Activated T-helper 2 cell treated with anti-CD3 and anti-CD28 coated beads, Interferon-gamma antibody, Interleukin-2, Interleukin-4, amounts not matched to agents 10 μg/mL and 5 μg/mL and 100 μg/mL, durations not matched to agents 14 hours and 24 hours and 36 hours (primary cell): ENCODE measurements at regions of chr10 and their contacts with region 1.

Region 1: DNA sequence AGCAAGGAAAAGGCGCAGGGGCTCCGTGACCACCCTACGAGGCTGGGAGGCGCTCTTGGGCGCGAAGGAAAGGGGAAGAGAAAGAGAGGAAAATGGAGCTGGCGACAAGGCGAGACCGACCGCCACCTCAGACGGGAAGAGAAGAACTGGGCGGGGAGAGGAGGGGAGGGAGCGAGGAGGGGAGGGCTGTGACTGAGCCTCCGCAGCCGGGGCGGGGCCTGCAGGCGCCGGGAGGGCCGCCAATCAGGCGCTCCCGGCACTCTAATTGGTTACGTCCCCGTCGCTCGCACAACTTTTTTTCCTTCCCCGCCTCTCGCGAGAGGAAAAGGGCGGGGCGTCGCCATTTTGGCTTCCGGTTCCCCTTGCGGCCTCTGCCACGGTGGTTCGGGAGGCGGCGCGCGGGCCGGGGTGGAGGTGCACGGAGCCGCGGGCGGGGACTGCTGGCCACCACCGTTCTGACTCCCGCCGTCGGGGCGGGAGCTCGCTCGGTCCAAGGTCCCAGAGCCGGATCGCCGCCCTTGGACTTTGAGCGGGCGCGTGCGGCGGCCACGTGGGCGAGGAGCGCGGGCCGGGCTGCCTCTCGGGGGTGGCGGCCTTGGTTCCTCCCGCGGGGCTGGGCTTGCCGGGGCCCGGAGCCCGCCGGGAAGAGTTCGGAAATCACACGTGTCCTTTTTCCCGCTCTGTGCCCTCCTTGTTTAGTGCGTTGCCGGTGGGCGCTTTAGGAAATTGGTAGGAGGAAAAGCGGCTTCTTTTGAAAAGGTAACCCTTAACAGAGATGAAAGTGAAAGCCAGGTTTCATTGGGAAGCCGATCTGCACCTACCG is at the start of gene GDI2:
- DNase-seq: peak; percentile 96
- H3K4me3 Mint-ChIP-seq: peak within 1 kb of the TSS; percentile 99
- H3K27ac Mint-ChIP-seq: peak within 1 kb of the TSS; percentile 89
- H3K4me1 Mint-ChIP-seq: peaks cover 51% of the 10 kb centered on the region
- H3K27me3 Mint-ChIP-seq: no peaks in the 10 kb centered on the region
- total RNA-seq, gene GDI2: 301 and 302 TPM in 2 replicates

Region 2: GRCh38 chr10:5684318-5684970 is 129.1 kb before region 1 on chr10 and contains the start of gene TASOR2:
- intact Hi-C with region 1: loop called (anchors 2 kb)
- DNase-seq: peak; percentile 96
- H3K4me3 Mint-ChIP-seq: peak within 1 kb of the TSS; percentile 96
- H3K27ac Mint-ChIP-seq: peak within 1 kb of the TSS; percentile 97
- H3K4me1 Mint-ChIP-seq: peaks cover 51% of the 10 kb centered on the region
- H3K27me3 Mint-ChIP-seq: peaks cover 9% of the 10 kb centered on the region
- total RNA-seq, gene TASOR2: 60.1 and 68.7 TPM in 2 replicates

Region 3: DNA sequence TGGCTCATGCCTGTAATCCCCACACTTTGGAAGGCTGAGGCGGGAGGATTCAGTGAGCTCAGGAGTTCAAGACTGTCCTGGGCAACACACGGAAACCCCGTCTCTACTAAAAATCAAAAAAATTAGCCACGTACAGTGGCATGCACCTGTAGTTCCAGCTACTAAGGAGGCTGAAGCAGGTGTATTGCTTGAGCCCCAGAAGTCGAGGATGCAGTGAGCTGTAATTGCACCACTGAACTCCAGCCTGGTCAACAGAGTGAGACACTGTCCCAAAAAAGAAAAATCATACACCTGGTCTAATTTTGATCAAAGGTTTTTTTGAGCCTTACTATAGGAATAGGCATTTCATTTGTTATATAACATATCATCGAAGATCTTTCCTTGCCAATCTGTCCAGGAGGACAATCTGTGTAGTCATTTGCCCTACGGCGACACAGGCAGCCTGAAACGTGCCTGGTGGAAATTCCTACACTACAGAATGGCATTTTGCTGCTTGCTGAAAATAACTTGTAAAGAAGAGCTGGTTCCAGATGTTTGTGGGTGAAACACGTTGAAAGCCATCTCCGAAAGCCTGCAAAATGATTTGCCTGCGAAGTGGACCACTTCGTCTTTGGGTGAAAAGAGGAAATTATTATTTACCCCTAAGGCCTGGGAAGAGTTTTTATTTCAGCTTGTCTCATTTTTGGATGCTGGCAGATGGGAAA is 31.0 kb after region 1 on chr10:
- intact Hi-C with region 1: loop called (anchors 1 kb)
- DNase-seq: no peak
- H3K4me3 Mint-ChIP-seq: no peak overlapping the region
- H3K27ac Mint-ChIP-seq: peak overlapping the region; percentile 47
- H3K4me1 Mint-ChIP-seq: peaks cover 19% of the 10 kb centered on the region
- H3K27me3 Mint-ChIP-seq: peaks cover 2% of the 10 kb centered on the region

Region 4: GRCh38 chr10:5889624-5890451 is 76.3 kb after region 1 on chr10 and contains the starts of genes ANKRD16 and FBH1:
- intact Hi-C with region 1: loop called (anchors 5 kb)
- DNase-seq: peak; percentile 98
- H3K4me3 Mint-ChIP-seq: peak within 1 kb of the TSS; percentile 94
- H3K27ac Mint-ChIP-seq: peak within 1 kb of the TSS; percentile 79
- H3K4me1 Mint-ChIP-seq: peaks cover 41% of the 10 kb centered on the region
- H3K27me3 Mint-ChIP-seq: no peaks in the 10 kb centered on the region
- total RNA-seq, gene ANKRD16: 10.4 and 11.6 TPM in 2 replicates
- total RNA-seq, gene FBH1: 57.2 and 58.0 TPM in 2 replicates

Region 5: GRCh38 chr10:5904227-5904626 is 90.7 kb after region 1 on chr10:
- intact Hi-C with region 1: no loop called
- DNase-seq: no peak
- H3K4me3 Mint-ChIP-seq: no peak overlapping the region
- H3K27ac Mint-ChIP-seq: peak overlapping the region; percentile 85
- H3K4me1 Mint-ChIP-seq: peaks cover 18% of the 10 kb centered on the region
- H3K27me3 Mint-ChIP-seq: no peaks in the 10 kb centered on the region

Region 6: DNA sequence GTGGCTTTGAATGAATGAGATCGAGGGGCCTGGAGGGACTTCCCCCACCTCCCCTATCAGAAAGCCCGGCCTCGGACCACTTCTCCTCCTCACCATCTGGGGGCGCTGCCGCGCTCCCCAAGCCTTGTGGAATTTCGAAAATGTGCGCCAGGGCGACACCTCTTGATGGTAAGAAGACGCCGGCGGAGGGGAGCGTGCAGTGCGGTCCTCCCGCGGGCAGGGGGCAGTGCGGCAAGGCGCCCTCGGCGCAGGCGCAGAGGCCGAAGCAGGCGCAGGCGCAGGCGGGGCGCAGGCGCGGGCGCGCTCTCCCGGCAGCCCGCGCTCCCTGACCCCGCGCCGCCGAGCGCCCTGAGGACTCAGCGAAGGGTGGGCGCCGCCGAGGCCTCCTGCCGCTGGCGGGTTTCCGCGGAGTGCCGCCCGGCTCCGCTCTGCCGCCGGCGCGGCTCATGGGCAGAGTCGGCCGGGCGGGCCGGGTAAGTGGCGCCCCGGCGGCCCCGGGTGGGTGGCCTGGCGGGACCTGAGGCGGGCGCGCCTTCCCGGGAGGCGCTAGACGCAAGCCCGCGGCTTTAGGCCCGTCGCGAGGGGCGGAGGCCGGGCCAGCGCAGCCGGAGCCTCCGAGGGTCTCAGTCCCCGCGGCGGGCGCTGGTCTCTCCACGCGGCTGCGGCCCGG is 275.4 kb after region 1 on chr10 and contains the start of gene RBM17:
- intact Hi-C with region 1: loop called (anchors 10 kb)
- DNase-seq: peak; percentile 98
- H3K4me3 Mint-ChIP-seq: peak within 1 kb of the TSS; percentile 98
- H3K27ac Mint-ChIP-seq: peak within 1 kb of the TSS; percentile 80
- H3K4me1 Mint-ChIP-seq: peaks cover 63% of the 10 kb centered on the region
- H3K27me3 Mint-ChIP-seq: no peaks in the 10 kb centered on the region
- total RNA-seq, gene RBM17: 257 and 266 TPM in 2 replicates

Region 7: GRCh38 chr10:6401562-6402348 is 588.3 kb after region 1 on chr10:
- intact Hi-C with region 1: no loop called
- DNase-seq: peak; percentile 47
- H3K4me3 Mint-ChIP-seq: no peak overlapping the region
- H3K27ac Mint-ChIP-seq: no peak overlapping the region
- H3K4me1 Mint-ChIP-seq: peaks cover 37% of the 10 kb centered on the region
- H3K27me3 Mint-ChIP-seq: peaks cover 11% of the 10 kb centered on the region